GM10248 (cell line): ENCODE measurements at regions of chr1 and their contacts with region 1.

Region 1: DNA sequence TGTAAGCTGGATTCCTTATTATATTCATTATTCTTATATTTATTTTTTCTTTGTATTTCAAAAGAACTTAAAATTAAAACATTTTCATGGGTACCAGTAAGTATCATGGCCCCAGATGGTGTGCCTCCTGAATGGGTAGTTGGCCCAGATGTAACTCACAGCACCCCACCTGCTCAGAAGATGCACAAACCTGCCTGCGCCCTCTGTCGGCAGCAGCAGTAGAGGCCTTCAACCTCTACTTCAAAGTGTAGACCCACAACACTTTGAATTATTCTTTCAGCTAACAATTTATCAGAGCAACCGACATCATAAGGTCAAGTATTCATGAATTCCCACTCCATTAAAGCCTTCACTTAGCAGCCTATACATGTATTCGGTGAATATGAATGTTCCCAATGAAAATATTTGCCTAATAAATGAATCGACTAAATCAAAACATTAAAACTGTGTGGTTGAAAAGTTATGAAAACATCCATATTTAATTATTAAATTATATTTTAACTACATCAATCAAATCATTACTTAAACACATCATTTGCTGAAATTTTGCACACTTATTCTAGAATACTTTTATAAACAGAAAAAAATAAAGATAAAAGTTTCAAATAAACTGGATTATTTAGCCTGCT is 25.4 kb downstream of the PIGM start:
- DNase-seq: peak; percentile 81
- CTCF ChIP-seq: peak; percentile 97

Region 2: GRCh38 chr1:159780583-159781582 is 225.5 kb before region 1 on chr1 and contains the start of gene DUSP23:
- CTCF ChIA-PET with region 1: interaction called, 20 read pairs
- POLR2A ChIA-PET with region 1: no interaction called
- DNase-seq: peak; percentile 97
- CTCF ChIP-seq: peak; percentile 68

Region 3: DNA sequence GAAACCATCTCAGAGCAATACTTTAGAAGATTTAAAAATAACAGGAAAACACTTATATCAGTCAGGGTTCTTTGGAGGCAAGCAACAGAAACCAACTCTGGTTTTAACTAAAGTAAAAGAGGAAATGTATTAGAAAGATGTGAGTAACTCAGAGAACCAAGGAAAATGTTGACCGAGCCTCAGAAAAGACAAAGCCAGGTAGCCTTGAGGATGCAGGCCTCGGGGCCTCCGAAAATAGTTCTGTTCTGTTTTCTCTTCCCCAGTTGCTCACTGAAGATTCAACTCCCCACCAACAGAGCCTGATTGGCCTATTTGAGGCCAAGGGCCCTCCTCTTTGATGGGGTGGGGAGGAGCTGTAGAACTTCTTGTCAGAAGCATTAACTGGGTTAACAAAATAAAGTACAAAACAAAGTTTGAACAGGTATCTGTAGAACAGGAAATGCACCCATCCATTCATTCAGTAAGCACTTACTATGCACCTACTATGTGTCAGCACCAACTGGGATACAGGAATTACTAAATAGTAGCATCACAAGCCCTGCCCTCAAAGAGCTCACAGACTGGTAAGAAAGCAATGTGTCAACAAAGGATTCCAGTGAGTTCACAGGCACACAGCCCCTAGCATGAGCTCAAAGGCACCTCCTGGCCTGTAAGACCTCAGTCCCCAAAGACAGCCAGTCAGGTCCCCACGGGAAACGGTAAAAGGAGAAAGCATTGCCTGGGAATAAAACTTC is 167.1 kb before region 1 on chr1:
- CTCF ChIA-PET with region 1: interaction called, 14 read pairs
- POLR2A ChIA-PET with region 1: no interaction called
- DNase-seq: peak; percentile 65
- CTCF ChIP-seq: no peak

Region 4: GRCh38 chr1:159902551-159902950 is 103.9 kb before region 1 on chr1:
- CTCF ChIA-PET with region 1: no interaction called
- POLR2A ChIA-PET with region 1: no interaction called
- DNase-seq: no peak
- CTCF ChIP-seq: no peak

Region 5: GRCh38 chr1:159936273-159936904 is 70.0 kb before region 1 on chr1:
- CTCF ChIA-PET with region 1: interaction called, 232 read pairs
- POLR2A ChIA-PET with region 1: no interaction called
- DNase-seq: peak; percentile 87
- CTCF ChIP-seq: peak; percentile 98

Region 6: GRCh38 chr1:159970932-159971342 is 35.5 kb before region 1 on chr1:
- CTCF ChIA-PET with region 1: interaction called, 25 read pairs
- POLR2A ChIA-PET with region 1: no interaction called
- DNase-seq: no peak
- CTCF ChIP-seq: no peak

Region 7: GRCh38 chr1:160018900-160019299 is 12.5 kb after region 1 on chr1:
- CTCF ChIA-PET with region 1: interaction called, 102 read pairs
- POLR2A ChIA-PET with region 1: no interaction called
- DNase-seq: no peak
- CTCF ChIP-seq: no peak

Region 8: DNA sequence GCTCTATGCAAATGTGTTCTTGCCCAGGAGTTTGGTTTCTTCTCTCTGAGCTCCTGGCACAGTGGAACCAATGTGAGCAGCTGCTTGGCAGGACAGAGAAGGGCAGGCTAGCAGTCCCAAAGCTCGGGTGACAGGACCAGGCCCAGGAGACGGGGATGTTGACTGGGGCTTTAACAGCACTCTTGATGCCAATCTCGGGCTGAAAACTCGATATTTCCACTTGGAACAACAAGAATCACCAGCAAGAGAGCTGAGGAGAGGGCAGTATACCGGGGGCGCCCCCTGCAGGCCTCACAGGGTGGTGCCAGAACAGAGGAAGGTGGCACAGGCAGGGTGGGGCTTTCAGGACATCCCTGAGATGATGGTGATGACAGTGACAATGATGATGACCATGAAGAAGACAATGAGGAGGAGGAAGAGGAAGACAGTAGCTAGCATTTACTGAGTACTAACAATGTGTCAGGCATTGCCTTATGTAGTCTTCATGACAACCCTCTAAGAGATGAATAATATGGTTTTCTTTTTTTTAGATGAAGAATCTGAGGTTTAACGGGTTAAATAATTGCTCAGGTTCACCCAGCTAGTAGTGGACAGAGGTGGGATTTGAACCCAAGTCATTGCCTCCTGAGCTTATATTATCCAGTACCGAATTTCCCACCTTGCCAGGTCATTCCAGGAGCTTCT is 72.2 kb after region 1 on chr1:
- CTCF ChIA-PET with region 1: interaction called, 12 read pairs
- POLR2A ChIA-PET with region 1: no interaction called
- DNase-seq: peak; percentile 71
- CTCF ChIP-seq: peak; percentile 77